ENCODE measurements at regions of chr11 and their contacts with region 1.

Region 1: DNA sequence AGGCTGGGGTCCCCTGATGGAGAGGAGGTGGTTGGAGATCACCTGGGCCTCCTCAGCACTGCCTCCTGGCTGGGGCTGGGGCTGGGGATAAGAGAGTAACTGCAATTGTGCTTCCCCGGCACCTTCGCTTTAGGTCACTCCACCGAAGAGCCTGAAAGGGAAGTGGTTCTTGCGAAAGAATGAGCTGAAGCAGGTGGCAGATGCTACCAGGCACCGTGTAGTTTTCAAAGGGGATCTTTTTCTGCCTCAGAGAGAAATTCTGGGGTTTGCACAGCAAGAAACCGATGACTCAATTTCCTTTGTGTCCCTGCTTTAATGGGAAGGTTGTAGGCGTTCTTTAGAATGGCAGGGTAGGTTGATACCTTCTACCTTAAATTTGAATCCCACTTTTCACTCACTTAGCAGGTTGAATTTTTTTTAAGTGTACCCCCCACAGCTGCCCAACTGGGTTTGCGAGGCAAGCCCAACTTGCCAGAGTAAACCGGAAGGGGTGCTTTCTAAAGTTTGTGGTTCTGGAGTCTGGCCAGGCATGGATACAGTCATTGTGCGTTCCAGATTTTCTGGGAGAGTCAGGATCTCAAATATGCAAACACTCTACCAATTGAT is 5.3 kb downstream of the CD44 start:
- DNase-seq: peak; percentile 91
- H3K4me3 Mint-ChIP-seq: peak overlapping the region; percentile 87
- H3K27ac Mint-ChIP-seq: peak overlapping the region; percentile 96
- H3K4me1 Mint-ChIP-seq: peaks cover 71% of the 10 kb centered on the region
- H3K27me3 Mint-ChIP-seq: no peaks in the 10 kb centered on the region

Region 2: GRCh38 chr11:34243726-34244464 is 900.3 kb before region 1 on chr11:
- intact Hi-C with region 1: loop called (anchors 10 kb)
- DNase-seq: peak; percentile 82
- H3K4me3 Mint-ChIP-seq: peak overlapping the region; percentile 62
- H3K27ac Mint-ChIP-seq: peak overlapping the region; percentile 72
- H3K4me1 Mint-ChIP-seq: peaks cover 80% of the 10 kb centered on the region
- H3K27me3 Mint-ChIP-seq: no peaks in the 10 kb centered on the region

Region 3: GRCh38 chr11:35013514-35014233 is 130.6 kb before region 1 on chr11:
- intact Hi-C with region 1: loop called (anchors 1 kb)
- DNase-seq: peak; percentile 85
- H3K4me3 Mint-ChIP-seq: peak overlapping the region; percentile 50
- H3K27ac Mint-ChIP-seq: peak overlapping the region; percentile 91
- H3K4me1 Mint-ChIP-seq: peaks cover 39% of the 10 kb centered on the region
- H3K27me3 Mint-ChIP-seq: peaks cover 16% of the 10 kb centered on the region

Region 4: GRCh38 chr11:35126000-35126878 is 18.0 kb before region 1 on chr11:
- intact Hi-C with region 1: loop called (anchors 1 kb)
- DNase-seq: peak; percentile 79
- H3K4me3 Mint-ChIP-seq: peak overlapping the region; percentile 74
- H3K27ac Mint-ChIP-seq: peak overlapping the region; percentile 80
- H3K4me1 Mint-ChIP-seq: peaks cover 50% of the 10 kb centered on the region
- H3K27me3 Mint-ChIP-seq: peaks cover 3% of the 10 kb centered on the region

Region 5: GRCh38 chr11:35237860-35238715 is 93.8 kb after region 1 on chr11:
- intact Hi-C with region 1: loop called (anchors 5 kb)
- DNase-seq: peak; percentile 88
- H3K4me3 Mint-ChIP-seq: peak overlapping the region; percentile 33
- H3K27ac Mint-ChIP-seq: no peak overlapping the region
- H3K4me1 Mint-ChIP-seq: peaks cover 69% of the 10 kb centered on the region
- H3K27me3 Mint-ChIP-seq: peaks cover 7% of the 10 kb centered on the region

Region 6: GRCh38 chr11:35391922-35392813 is 247.9 kb after region 1 on chr11:
- intact Hi-C with region 1: loop called (anchors 1 kb)
- DNase-seq: peak; percentile 94
- H3K4me3 Mint-ChIP-seq: peak overlapping the region; percentile 66
- H3K27ac Mint-ChIP-seq: peak overlapping the region; percentile 24
- H3K4me1 Mint-ChIP-seq: peaks cover 24% of the 10 kb centered on the region
- H3K27me3 Mint-ChIP-seq: peaks cover 14% of the 10 kb centered on the region

Measured in activated CD4-positive, alpha-beta T cell treated with anti-CD3 and anti-CD28 coated beads, Interleukin-2, amount 10 ng/mL, durations not matched to agents 24 days and 14 days (primary cell).